Astrocyte of the cerebellum (primary cell): ENCODE measurements at regions of chr12 and their contacts with region 1.

Region 1: GRCh38 chr12:29907461-29907860 is 123.7 kb upstream of the TMTC1 start:
- DNase-seq: no peak
- H3K4me3 ChIP-seq: no peak overlapping the region
- CTCF ChIP-seq: no peak

Region 2: DNA sequence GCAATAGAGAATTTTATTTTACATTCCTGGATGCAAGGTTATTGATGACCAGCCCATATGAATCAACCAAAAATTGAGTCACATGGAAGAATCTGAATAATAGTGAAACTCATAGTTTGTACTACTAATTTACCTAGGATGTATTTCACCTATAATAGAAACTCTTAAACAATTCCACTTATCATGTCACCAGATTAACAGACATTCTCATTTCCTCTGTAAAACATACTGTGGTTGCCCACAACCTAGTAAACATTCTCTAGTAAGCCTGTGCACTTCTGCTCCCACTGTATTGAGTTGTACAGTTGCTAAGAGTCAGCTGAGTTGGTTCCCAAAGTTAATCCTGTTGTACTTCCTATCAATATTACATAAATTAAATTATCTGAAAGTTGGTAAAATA is 72.8 kb after region 1 on chr12:
- in situ Hi-C with region 1: loop called (anchors 5 kb)
- DNase-seq: no peak
- H3K4me3 ChIP-seq: no peak overlapping the region
- CTCF ChIP-seq: no peak

Region 3: GRCh38 chr12:30296486-30296885 is 389.0 kb after region 1 on chr12:
- in situ Hi-C with region 1: no loop called
- DNase-seq: no peak
- H3K4me3 ChIP-seq: no peak overlapping the region
- CTCF ChIP-seq: no peak